ENCODE measurements at regions of chr3 and their contacts with region 1.

Region 1: DNA sequence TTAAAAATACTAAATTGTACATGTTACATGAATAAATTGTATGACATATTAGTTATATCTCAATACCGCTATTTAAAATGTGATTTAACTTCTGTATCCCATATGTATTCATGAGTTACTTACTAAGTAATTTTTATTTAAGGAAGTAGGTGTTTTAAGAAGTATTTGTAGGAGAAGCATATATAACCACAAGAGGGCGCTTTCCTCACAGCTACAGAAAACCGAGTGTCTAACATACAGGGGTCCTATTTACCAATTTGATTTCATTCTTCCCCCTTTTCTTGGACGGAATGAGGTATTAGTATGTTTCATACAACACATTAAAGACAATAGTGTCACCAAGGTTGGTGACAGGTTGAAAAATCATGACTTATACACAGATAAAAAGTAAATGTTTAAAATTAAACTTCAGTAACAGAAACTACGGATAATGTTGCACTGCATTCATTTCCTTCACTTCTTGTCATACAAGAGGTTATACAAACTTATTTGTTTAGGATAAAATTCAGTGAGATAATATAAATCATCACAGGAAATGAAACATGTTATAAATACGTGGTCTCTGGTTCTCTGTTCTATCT is 253.6 kb downstream of the MAGI1 start:
- DNase-seq: peak; percentile 27
- H3K4me3 ChIP-seq: no peak overlapping the region
- H3K27ac ChIP-seq: no peak overlapping the region
- H3K4me1 ChIP-seq: peaks cover 5% of the 10 kb centered on the region
- H3K27me3 ChIP-seq: no peaks in the 10 kb centered on the region
- CTCF ChIP-seq: peak; percentile 57 to 86 (median 68)
- POLR2A ChIP-seq: no peak

Region 2: DNA sequence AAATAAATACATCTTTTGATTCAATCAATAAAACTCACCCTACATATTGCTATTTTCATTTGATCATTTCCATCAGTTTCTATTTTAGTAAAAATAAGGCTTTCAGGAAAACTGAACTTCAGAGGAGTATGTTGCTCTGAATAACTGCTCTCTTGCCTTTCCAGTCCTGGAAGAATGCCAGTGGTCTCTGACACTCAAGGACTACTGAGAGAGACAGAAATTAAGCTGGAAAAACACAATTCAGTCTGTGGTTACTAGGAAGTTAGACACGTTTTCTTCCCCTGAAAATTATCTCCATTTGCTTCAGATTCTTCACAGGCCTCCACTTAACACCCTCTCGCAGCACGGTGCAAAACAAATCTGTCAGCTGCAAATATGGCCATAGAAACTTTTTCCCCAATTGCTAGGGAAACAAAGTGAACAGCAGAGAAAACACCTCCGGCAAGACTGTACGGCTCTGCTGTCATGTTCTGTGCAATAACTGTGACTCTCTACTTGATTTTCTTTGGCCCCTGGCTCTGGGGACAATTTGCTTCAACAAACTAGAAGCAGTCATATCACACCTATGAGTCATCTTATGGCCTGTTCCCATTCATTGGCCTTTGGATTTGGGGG is 99.4 kb before region 1 on chr3:
- intact Hi-C with region 1: no loop called
- DNase-seq: no peak
- H3K4me3 ChIP-seq: no peak overlapping the region
- H3K27ac ChIP-seq: no peak overlapping the region
- H3K4me1 ChIP-seq: no peaks in the 10 kb centered on the region
- H3K27me3 ChIP-seq: no peaks in the 10 kb centered on the region
- CTCF ChIP-seq: no peak
- POLR2A ChIP-seq: no peak

Region 3: DNA sequence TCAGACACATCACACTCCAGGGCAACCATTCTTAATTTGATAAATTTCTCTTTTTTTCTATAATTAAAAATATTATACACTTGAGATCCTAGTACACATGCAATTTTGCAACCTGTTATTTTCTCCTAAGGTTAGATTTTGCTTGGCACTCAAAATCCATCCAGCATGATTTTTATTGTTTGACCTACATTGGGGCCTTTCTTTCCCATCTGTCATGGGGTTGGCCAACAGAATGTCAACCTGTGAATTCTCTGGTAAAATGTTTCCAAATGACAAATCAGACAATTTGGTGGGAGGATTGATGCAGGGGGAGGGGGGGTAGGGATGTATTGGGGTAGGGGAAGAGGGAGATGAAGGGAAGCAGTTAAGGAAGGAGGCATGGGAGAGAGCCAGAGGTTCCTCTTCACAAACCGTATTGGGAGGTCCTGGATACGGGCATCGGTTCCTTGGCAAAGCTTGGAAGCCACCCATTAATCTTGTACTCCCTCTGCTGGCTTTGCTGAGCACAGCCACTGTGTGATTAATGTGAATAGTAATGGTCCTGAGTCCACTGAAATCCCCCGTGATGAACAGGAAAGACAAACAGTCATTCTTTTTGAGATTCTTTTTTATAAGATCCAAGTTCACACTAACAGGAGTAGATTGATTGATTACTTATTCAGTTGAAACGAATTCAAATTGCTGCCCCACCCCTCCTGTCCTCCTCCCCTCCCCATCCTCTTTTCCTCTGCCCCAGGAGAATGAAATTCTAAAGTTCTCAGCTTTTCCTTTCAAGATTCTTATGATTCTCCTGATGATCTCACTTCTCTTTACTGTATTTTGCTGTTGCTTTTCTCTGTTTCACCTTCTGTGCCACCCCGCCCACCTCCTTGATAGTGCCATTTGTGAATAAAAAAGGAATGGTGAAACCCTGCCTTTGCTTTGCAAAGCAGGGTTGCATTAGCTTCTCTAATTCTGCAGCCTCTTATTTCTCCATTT is 353.5 kb after region 1 on chr3:
- intact Hi-C with region 1: loop called (anchors 5 kb)
- DNase-seq: peak; percentile 51
- H3K4me3 ChIP-seq: no peak overlapping the region
- H3K27ac ChIP-seq: no peak overlapping the region
- H3K4me1 ChIP-seq: no peaks in the 10 kb centered on the region
- H3K27me3 ChIP-seq: no peaks in the 10 kb centered on the region
- CTCF ChIP-seq: peak; percentile 19 to 80 (median 76)
- POLR2A ChIP-seq: no peak

Region 4: GRCh38 chr3:66957367-66957766 is 1172.2 kb after region 1 on chr3:
- intact Hi-C with region 1: no loop called
- DNase-seq: no peak
- H3K4me3 ChIP-seq: no peak overlapping the region
- H3K27ac ChIP-seq: no peak overlapping the region
- H3K4me1 ChIP-seq: no peaks in the 10 kb centered on the region
- H3K27me3 ChIP-seq: no peaks in the 10 kb centered on the region
- CTCF ChIP-seq: no peak
- POLR2A ChIP-seq: no peak